B cell (primary cell): ENCODE measurements at regions of chr17 and their contacts with region 1.

Region 1: DNA sequence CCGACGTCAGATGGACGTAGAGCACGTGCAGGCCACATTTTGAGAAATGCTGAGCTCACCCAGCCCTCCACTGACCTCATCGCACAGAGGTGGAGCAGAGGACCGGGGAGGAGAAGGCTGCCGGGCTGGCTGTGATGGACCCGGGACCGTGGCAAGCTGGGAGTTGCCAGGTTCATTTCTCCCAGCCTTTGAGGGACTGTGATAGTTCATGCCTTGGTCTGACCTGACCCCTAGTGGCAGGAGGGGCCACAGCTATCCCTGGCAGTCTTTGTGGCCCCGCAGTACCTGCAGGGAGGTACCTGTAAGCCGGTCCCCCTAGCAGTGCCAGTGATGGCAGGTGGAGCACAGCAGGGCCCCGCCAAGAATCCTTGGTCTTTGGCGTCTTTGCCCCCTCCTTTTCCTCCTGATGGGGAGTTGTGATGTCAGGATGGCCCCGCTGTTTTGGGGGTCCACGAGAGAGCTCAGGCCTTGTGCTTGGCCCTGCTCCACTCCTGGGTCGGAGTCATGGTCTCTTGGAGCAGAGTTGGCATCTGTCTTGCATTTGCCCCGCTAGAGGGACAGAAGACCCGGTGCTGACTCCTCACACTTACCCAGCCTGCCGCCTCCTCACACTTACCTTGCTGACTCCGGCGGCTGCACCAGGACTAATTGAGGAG is 50.4 kb downstream of the OR1D5 start:
- DNase-seq: peak; percentile 78
- ATAC-seq: peak; percentile 96
- H3K4me3 ChIP-seq: no peak overlapping the region
- H3K4me3 Mint-ChIP-seq: no peak overlapping the region
- H3K27ac ChIP-seq: no peak overlapping the region
- H3K27ac Mint-ChIP-seq: peak overlapping the region; percentile 41
- H3K4me1 ChIP-seq: no peaks in the 10 kb centered on the region
- H3K4me1 Mint-ChIP-seq: peaks cover 3% of the 10 kb centered on the region
- H3K27me3 ChIP-seq: no peaks in the 10 kb centered on the region
- H3K27me3 Mint-ChIP-seq: no peaks in the 10 kb centered on the region
- CTCF ChIP-seq: peak; percentile 84

Region 2: GRCh38 chr17:2786176-2786881 is 226.7 kb before region 1 on chr17:
- CTCF ChIA-PET with region 1: interaction called, 74 read pairs
- POLR2A ChIA-PET with region 1: interaction called, 3 read pairs
- intact Hi-C with region 1: loop called (anchors 1 kb)
- DNase-seq: peak; percentile 95
- ATAC-seq: peak; percentile 99
- H3K4me3 ChIP-seq: no peak overlapping the region
- H3K4me3 Mint-ChIP-seq: peak overlapping the region; percentile 44
- H3K27ac ChIP-seq: no peak overlapping the region
- H3K27ac Mint-ChIP-seq: peak overlapping the region; percentile 41
- H3K4me1 ChIP-seq: peaks cover 18 to 29% of the 10 kb centered on the region in 2 donors
- H3K4me1 Mint-ChIP-seq: peaks cover 19% of the 10 kb centered on the region
- H3K27me3 ChIP-seq: peaks cover 0 to 15% (median 4%) of the 10 kb centered on the region in 4 experiments
- H3K27me3 Mint-ChIP-seq: no peaks in the 10 kb centered on the region
- CTCF ChIP-seq: peak; percentile 89

Region 3: DNA sequence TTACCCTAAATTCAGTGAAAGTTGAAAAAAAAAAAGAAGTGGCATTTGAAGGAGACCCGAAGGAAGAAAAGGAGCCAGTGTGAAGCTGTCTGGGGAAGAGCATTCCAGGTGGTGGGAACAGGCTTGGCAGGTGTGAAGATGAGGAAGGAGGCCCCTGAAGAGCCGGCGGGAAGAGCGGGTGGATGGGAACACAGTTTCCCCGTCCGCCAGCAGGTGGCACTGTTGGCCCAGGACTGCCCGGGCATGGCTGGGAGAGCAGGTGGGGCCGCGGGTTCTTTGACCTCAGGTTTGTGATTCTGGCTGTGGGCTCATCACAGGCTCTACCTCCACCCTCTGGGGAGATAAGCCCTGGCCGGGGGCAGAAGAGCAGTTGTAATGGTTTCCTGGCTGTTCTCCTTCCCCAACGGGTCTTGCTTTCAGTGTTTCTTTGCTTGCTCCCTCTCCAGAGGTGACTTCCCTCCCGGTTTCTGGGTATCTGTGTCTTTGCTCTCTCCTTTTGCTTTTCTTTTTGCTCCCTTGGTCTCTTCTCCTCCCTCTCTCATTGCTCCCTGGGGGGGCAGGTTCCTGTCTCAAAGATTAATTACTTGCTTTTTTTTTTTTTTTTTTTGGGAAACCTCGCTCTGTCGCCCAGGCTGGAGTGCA is 184.5 kb before region 1 on chr17:
- CTCF ChIA-PET with region 1: interaction called, 86 read pairs
- POLR2A ChIA-PET with region 1: interaction called, 3 read pairs
- intact Hi-C with region 1: loop called (anchors 1 kb)
- DNase-seq: peak; percentile 87
- ATAC-seq: peak; percentile 75
- H3K4me3 ChIP-seq: peak overlapping the region in 1 of 5 experiments; percentile 29
- H3K4me3 Mint-ChIP-seq: no peak overlapping the region
- H3K27ac ChIP-seq: no peak overlapping the region
- H3K27ac Mint-ChIP-seq: peak overlapping the region; percentile 39
- H3K4me1 ChIP-seq: peaks cover 20 to 40% of the 10 kb centered on the region in 2 donors
- H3K4me1 Mint-ChIP-seq: peaks cover 33% of the 10 kb centered on the region
- H3K27me3 ChIP-seq: peaks cover 0 to 22% (median 1%) of the 10 kb centered on the region in 4 experiments
- H3K27me3 Mint-ChIP-seq: peaks cover 2% of the 10 kb centered on the region
- CTCF ChIP-seq: peak; percentile 93

Region 4: GRCh38 chr17:2847381-2848333 is 165.4 kb before region 1 on chr17:
- CTCF ChIA-PET with region 1: interaction called, 370 read pairs
- POLR2A ChIA-PET with region 1: no interaction called
- intact Hi-C with region 1: loop called (anchors 1 kb)
- DNase-seq: no peak
- ATAC-seq: no peak
- H3K4me3 ChIP-seq: no peak overlapping the region
- H3K4me3 Mint-ChIP-seq: no peak overlapping the region
- H3K27ac ChIP-seq: no peak overlapping the region
- H3K27ac Mint-ChIP-seq: no peak overlapping the region
- H3K4me1 ChIP-seq: peaks cover 12 to 17% of the 10 kb centered on the region in 2 donors
- H3K4me1 Mint-ChIP-seq: peaks cover 16% of the 10 kb centered on the region
- H3K27me3 ChIP-seq: peaks cover 0 to 51% (median 9%) of the 10 kb centered on the region in 4 experiments
- H3K27me3 Mint-ChIP-seq: peaks cover 30% of the 10 kb centered on the region
- CTCF ChIP-seq: no peak

Region 5: GRCh38 chr17:2862197-2862596 is 150.9 kb before region 1 on chr17:
- CTCF ChIA-PET with region 1: interaction called, 10 read pairs
- POLR2A ChIA-PET with region 1: no interaction called
- intact Hi-C with region 1: no loop called
- DNase-seq: no peak
- ATAC-seq: no peak
- H3K4me3 ChIP-seq: no peak overlapping the region
- H3K4me3 Mint-ChIP-seq: no peak overlapping the region
- H3K27ac ChIP-seq: no peak overlapping the region
- H3K27ac Mint-ChIP-seq: no peak overlapping the region
- H3K4me1 ChIP-seq: no peaks in the 10 kb centered on the region
- H3K4me1 Mint-ChIP-seq: no peaks in the 10 kb centered on the region
- H3K27me3 ChIP-seq: peaks cover 0 to 8% (median under 1%) of the 10 kb centered on the region in 4 experiments
- H3K27me3 Mint-ChIP-seq: peaks cover 3% of the 10 kb centered on the region
- CTCF ChIP-seq: no peak